ENCODE measurements at regions of chr5 and their contacts with region 1.

Region 1: DNA sequence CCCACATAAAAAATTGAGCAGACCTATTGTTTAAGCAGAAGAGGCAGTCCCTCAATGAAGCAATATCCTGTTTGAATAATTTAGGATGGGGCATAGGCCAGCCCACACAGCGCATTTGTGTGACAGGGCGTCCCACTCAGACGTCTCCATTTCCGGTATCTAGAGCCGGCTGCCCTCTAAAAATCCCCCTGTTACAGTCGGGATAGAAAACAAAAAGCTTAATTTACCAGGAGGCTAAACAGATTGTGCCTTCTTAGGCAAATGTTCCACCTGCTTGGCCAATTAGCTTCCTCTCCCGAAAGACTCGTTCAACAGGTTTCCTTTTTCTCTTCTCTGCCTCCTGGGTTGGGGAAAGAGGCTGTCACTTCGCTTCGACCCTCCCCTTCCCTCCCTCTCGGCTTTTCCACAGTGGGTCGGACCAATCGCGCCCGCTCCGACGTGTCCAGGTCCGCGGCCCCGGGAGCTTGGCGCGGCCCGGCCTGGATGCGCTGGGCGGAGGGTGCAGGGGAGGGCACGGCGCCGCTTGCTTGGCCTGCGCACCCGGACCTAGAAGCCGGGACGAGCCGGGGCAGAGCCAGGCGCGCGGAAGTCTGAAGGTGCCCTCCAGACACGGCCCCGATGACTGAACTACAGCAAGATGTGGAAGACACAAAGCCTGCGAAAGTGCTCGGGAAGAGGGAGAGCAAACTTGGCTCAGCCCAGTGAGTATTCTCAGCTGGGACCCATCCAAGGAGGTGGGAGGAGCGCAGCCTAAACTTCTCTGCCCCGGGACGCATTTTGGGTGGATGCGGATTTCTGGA is at the start of gene GRAMD2B:
- DNase-seq: peak; percentile 87
- H3K4me3 Mint-ChIP-seq: peak within 1 kb of the TSS; percentile 81
- H3K27ac Mint-ChIP-seq: peak within 1 kb of the TSS; percentile 88
- H3K4me1 Mint-ChIP-seq: peaks cover 29% of the 10 kb centered on the region
- H3K27me3 Mint-ChIP-seq: no peaks in the 10 kb centered on the region
- total RNA-seq, gene GRAMD2B: 8.7 to 10.8 TPM

Region 2: GRCh38 chr5:126438267-126438666 is 15.1 kb after region 1 on chr5:
- CTCF ChIA-PET with region 1: interaction called, 5 read pairs
- intact Hi-C with region 1: loop called (anchors 1 kb)
- DNase-seq: no peak
- H3K4me3 Mint-ChIP-seq: no peak overlapping the region
- H3K27ac Mint-ChIP-seq: peak overlapping the region; percentile 77
- H3K4me1 Mint-ChIP-seq: peaks cover 31% of the 10 kb centered on the region
- H3K27me3 Mint-ChIP-seq: no peaks in the 10 kb centered on the region

Region 3: DNA sequence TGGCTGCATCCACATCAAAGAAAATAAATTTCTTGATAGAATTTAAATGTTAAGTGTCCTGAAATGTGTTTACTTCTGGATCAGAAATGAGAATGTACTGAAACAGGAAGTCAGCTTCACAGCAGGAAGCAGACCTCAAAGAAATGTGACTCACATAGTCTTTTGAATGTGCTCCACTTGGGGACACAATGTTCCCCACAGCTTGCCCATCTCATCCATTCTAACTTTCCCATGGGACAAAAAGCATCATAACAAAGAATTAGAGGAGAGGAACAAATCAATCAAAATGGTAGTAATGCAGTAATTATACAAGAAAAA is 85.7 kb after region 1 on chr5:
- CTCF ChIA-PET with region 1: no interaction called
- intact Hi-C with region 1: loop called (anchors 1 kb)
- DNase-seq: peak; percentile 28
- H3K4me3 Mint-ChIP-seq: peak overlapping the region; percentile 33
- H3K27ac Mint-ChIP-seq: peak overlapping the region; percentile 64
- H3K4me1 Mint-ChIP-seq: peaks cover 40% of the 10 kb centered on the region
- H3K27me3 Mint-ChIP-seq: no peaks in the 10 kb centered on the region

Region 4: GRCh38 chr5:127517480-127518318 is 1094.5 kb after region 1 on chr5 and contains the start of gene PRRC1:
- CTCF ChIA-PET with region 1: no interaction called
- intact Hi-C with region 1: loop called (anchors 10 kb)
- DNase-seq: peak; percentile 83
- H3K4me3 Mint-ChIP-seq: peak within 1 kb of the TSS; percentile 81
- H3K27ac Mint-ChIP-seq: peak within 1 kb of the TSS; percentile 63
- H3K4me1 Mint-ChIP-seq: peaks cover 31% of the 10 kb centered on the region
- H3K27me3 Mint-ChIP-seq: no peaks in the 10 kb centered on the region
- total RNA-seq, gene PRRC1: 34.1 to 35.1 TPM

Measured in activated naive CD4-positive, alpha-beta T cell treated with anti-CD3 and anti-CD28 coated beads for 36 hours (primary cell).